Adrenal gland (tissue), 19 donors: ENCODE measurements at regions of chr21 and their contacts with region 1.

Region 1: DNA sequence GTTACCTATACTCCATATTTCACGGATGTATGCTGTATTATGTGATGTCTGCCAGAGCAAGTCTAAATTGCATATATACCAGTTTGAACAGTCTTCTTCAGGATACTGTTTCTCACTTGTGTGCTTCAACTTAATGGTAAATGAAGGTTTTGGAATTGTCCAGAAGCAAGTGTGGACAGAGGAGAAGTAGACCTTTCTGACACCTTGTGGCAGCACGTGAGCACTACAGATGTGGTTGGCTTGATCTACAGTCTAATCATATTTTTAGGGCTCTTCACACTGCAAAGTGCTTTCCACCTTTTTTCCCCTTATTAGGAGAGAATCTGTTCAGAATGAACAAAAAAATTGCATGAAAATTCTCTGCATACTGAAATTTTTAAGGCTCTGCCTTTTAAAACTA is 10.9 kb downstream of the MORC3 start:
- DNase-seq: peak in 6 of 7 donors; percentile 46 to 76 (median 51)
- H3K4me3 ChIP-seq: no peak overlapping the region
- H3K27ac ChIP-seq: no peak overlapping the region
- H3K4me1 ChIP-seq: peaks cover 32 to 39% of the 10 kb centered on the region in 2 donors
- H3K27me3 ChIP-seq: no peaks in the 10 kb centered on the region
- CTCF ChIP-seq: peak; percentile 34 to 74 (median 64)
- POLR2A ChIP-seq: no peak

Region 2: GRCh38 chr21:36038701-36039497 is 292.0 kb before region 1 on chr21:
- intact Hi-C with region 1: no loop called
- DNase-seq: no peak
- H3K4me3 ChIP-seq: no peak overlapping the region
- H3K27ac ChIP-seq: no peak overlapping the region
- H3K4me1 ChIP-seq: no peaks in the 10 kb centered on the region
- H3K27me3 ChIP-seq: no peaks in the 10 kb centered on the region
- CTCF ChIP-seq: no peak
- POLR2A ChIP-seq: no peak

Region 3: DNA sequence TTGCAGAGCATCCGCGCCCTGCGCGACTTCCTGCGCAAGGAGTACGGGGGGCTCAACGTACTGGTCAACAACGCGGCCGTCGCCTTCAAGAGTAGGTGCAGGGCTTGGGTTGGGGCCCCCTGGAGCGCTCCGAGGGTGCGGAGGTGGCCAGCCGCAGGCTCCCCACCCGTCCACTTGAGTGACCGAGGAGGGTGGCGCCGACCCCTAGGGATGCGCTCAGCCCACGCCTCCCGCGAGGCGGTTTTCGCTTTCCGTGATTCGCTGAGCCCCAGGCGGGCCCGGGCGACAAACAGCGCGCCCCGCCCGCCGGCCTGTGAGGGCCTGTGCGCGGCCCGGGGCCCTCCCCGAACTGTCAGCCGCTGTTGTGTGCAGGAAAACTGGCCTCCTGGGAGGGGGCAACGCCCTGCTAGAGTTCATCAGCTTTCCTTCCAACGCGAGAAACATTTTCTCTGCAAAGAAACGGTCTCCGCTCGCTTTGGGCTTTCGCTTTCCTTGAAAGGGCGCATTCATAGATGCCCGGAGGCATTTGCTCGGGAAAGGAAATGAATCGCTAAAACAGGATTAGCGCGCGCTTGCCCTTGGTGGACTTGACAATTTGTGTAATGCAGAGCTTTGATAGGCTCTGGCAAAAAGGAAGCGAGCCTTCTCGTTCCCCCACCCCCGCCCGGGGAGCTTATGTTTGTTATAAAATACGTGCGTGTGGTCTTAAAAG is 195.4 kb before region 1 on chr21:
- intact Hi-C with region 1: loop called in 1 of 2 experiments (anchors 5 kb)
- DNase-seq: peak; percentile 39 to 82 (median 62)
- H3K4me3 ChIP-seq: peak overlapping the region in 3 of 4 donors; percentile 8 to 71 (median 67)
- H3K27ac ChIP-seq: peak overlapping the region in 4 of 5 donors; percentile 34 to 89 (median 52)
- H3K4me1 ChIP-seq: peaks cover 3 to 18% of the 10 kb centered on the region in 2 donors
- H3K27me3 ChIP-seq: no peaks in the 10 kb centered on the region
- CTCF ChIP-seq: no peak
- POLR2A ChIP-seq: no peak

Region 4: DNA sequence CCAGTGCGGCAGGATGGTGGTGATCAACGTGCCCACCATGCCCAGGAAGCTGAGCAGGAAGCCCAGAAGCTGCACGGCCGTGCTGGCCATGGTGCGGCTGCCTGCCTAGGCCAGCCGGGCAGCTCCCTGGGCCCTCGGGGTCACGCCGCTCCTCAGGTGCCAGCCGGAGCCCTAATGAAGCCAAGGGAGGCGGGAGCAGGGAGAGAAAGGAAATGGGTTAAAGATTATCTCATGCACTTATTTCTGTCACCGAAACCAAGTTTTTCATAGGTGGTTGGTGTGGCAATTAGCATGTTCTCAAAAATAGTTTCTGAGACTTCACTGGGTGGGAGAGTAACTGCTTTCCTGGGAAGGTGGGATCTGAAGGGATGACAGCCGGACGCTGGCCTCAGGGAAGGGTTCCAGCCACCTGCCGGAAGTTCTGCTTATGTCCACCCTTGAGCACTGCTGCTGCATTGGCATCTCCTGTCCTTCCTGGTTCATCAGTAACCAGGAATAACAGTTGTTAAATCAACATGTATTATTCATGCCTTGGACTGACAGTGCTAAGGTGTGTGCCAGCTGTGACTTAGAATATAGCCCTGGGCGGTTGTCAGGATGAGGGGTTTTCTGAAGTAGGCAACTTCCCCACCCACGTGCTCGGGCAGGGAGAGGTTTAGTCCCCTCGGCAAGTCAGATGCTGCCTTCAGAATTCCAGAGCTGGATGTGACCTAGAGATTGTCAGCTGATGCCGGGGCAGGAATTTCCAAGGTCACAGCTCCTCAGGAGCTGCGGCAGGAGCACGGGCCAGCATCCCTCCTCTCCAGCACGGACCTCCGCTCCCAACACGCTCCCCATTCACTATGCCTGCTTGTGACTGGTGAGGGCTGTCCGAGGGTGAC is 130.9 kb after region 1 on chr21:
- intact Hi-C with region 1: no loop called
- DNase-seq: no peak
- H3K4me3 ChIP-seq: no peak overlapping the region
- H3K27ac ChIP-seq: no peak overlapping the region
- H3K4me1 ChIP-seq: no peaks in the 10 kb centered on the region
- H3K27me3 ChIP-seq: no peaks in the 10 kb centered on the region
- CTCF ChIP-seq: no peak
- POLR2A ChIP-seq: no peak